ENCODE measurements at regions of chr11 and their contacts with region 1.

Region 1: GRCh38 chr11:5891216-5891800 is 1.7 kb upstream of the OR52E5 start:
- H3K4me3 Mint-ChIP-seq: no peak overlapping the region
- H3K27ac Mint-ChIP-seq: no peak overlapping the region
- H3K4me1 Mint-ChIP-seq: no peaks in the 10 kb centered on the region
- H3K27me3 Mint-ChIP-seq: peaks cover 2% of the 10 kb centered on the region

Region 2: DNA sequence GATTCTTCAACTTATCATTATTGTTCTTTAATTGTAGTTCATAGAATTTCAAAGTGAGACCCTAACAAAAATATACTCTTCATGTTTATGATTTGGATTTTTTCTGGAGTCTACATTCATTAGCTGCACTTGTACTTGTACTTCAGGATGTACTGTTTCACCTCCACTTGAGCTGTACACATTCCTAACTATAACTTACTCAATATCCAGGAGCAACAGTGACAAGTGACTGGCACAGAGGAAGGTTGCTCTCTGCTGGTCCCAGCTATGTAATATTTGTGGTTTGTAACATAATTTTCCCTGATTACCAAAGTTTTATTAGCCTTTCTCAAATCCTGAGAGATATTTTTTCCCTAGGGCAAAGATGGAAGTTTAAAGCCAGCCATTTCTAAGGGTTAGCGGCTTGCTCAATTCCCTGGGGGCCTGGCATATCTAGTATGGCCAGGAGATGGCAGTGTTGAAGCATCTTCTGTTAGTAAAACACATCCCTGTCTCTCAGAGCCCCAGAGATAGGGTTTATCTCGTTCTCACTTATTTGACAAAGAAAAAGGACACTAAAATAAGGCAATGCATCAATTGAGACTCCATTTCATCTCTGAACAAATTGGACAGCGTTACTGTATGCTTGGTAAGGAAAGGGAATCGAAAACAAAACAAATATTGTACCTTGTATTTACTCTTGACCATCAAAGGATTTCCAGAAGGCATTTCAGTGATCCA is 767.3 kb before region 1 on chr11:
- intact Hi-C with region 1: loop called (anchors 5 kb)
- H3K4me3 Mint-ChIP-seq: no peak overlapping the region
- H3K27ac Mint-ChIP-seq: no peak overlapping the region
- H3K4me1 Mint-ChIP-seq: no peaks in the 10 kb centered on the region
- H3K27me3 Mint-ChIP-seq: no peaks in the 10 kb centered on the region

Region 3: GRCh38 chr11:5204787-5205186 is 686.5 kb before region 1 on chr11:
- intact Hi-C with region 1: loop called (anchors 5 kb)
- H3K4me3 Mint-ChIP-seq: no peak overlapping the region
- H3K27ac Mint-ChIP-seq: no peak overlapping the region
- H3K4me1 Mint-ChIP-seq: no peaks in the 10 kb centered on the region
- H3K27me3 Mint-ChIP-seq: no peaks in the 10 kb centered on the region

Region 4: GRCh38 chr11:5600374-5600851 is 290.9 kb before region 1 on chr11:
- intact Hi-C with region 1: loop called (anchors 10 kb)
- H3K4me3 Mint-ChIP-seq: no peak overlapping the region
- H3K27ac Mint-ChIP-seq: no peak overlapping the region
- H3K4me1 Mint-ChIP-seq: peaks cover 14% of the 10 kb centered on the region
- H3K27me3 Mint-ChIP-seq: peaks cover 2% of the 10 kb centered on the region

Region 5: DNA sequence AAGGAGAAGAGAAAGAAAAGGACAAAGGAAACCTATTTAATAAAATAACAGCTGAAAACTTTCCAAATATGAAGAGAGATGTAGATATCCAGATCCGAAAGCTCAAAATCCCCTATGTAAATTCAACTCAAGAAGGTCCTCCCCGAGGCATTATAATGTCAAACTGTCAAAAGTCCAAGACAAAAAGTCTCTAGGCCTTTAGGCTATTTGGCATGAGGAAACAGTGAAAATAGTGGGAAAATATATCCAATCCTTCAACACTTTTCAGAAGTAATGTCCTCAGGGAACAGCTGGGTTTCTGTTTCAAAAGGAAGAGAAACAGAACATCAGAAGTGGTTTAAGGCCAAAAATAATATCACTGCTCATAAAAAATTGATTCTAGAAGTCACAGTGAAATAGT is 12.7 kb before region 1 on chr11:
- intact Hi-C with region 1: no loop called
- H3K4me3 Mint-ChIP-seq: no peak overlapping the region
- H3K27ac Mint-ChIP-seq: no peak overlapping the region
- H3K4me1 Mint-ChIP-seq: no peaks in the 10 kb centered on the region
- H3K27me3 Mint-ChIP-seq: no peaks in the 10 kb centered on the region